ENCODE measurements at regions of chr1 and their contacts with region 1.

Region 1: DNA sequence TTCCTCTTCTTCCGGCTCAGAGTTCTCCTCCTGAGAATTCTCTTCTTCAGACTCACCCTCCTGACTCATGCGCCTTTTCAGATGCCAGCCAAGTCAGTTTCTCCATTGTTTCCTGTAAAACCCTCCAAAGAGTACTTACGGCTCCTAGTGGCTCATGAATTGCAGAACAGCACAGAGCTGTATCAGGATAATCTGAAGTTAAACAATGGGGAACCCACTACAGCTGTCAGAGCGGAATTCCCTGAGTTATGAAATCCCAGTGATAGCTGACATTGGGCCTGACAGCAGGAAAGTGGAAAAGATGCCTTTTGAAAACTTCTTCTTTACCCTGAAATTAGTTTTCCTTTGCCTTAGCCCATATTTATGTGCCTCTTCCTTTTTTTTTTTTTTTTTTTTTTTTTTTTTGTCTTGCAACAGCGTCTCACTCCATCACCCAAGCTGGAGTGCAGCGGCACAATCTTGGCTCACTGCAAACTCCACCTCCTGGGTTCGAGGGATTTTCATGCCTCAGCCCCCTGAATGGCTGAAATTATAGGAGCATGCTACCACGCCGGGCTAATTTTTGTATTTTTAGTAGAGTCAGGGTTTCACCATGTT is 38.6 kb downstream of the MSTO1 start:
- DNase-seq: peak; percentile 49
- H3K4me3 ChIP-seq: peak overlapping the region; percentile 33
- H3K27me3 ChIP-seq: no peaks in the 10 kb centered on the region
- CTCF ChIP-seq: peak; percentile 65

Region 2: DNA sequence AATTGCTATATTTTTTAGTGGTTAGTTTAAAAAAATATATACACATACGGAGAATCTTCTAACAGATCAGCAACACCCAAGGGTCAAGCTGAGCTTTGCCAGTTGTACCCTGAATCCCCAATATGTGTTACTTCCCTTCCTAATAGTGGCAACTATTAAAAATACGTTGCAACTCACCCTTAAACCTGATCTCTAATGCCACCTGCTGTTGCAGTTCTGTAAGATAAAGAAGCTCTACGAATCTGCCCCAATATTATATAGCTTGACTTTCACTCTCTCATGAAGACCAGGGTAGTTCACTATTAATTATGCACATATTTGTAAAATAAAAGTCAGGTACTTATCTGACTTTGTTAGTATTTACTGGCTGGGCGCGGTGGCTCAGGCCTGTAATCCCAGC is 144.4 kb before region 1 on chr1:
- CTCF ChIA-PET with region 1: no interaction called
- POLR2A ChIA-PET with region 1: no interaction called
- DNase-seq: no peak
- H3K4me3 ChIP-seq: no peak overlapping the region
- H3K27me3 ChIP-seq: no peaks in the 10 kb centered on the region
- CTCF ChIP-seq: peak; percentile 32; the same call in 1 of the 2 replicates

Region 3: DNA sequence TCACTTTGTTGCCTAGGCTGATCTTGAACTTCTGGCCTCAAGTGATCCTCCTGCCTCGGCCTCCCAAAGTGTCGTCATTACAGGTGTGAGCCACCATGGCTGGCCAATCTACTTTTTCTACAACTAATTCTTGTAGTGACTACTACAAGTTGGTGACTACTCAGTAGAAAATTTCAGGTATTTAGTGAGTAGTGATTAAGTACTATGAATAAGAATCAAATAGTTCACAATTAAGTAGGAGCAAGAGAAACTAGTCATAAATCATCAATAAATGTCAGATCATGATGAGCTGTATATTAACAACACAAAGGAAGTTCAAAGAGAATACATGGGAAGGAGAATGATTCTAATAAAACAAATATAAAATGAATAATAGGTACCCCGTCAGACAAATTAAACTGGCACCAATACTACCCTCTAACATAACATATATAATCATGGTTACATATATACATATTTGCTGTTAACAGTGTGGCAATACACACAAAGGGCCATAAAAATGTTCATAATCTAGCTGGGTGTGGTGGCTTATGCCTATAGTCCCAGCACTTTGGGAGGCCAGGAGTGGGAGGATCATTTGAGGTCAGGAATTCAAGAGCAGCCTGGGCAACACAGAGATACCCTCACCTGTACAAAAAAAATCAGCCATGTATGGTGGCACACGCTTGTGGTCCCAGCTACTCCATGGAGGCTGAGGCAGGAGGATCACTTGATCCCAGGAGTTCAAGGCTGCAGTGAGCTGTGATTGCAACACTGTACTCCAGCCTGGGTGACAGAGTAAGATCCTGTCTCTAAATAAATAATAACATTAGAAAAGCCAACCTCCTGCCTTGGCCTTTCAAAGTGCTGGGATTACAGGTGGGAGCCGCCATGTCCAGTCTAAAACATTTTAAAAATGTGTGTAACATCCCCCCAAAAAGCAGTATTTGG is 20.8 kb after region 1 on chr1:
- CTCF ChIA-PET with region 1: interaction called, 11 read pairs
- POLR2A ChIA-PET with region 1: no interaction called
- DNase-seq: no peak
- H3K4me3 ChIP-seq: no peak overlapping the region
- H3K27me3 ChIP-seq: no peaks in the 10 kb centered on the region
- CTCF ChIP-seq: no peak